Esophagus muscularis mucosa (tissue), 4 donors: ENCODE measurements at regions of chr1 and their contacts with region 1.

Region 1: DNA sequence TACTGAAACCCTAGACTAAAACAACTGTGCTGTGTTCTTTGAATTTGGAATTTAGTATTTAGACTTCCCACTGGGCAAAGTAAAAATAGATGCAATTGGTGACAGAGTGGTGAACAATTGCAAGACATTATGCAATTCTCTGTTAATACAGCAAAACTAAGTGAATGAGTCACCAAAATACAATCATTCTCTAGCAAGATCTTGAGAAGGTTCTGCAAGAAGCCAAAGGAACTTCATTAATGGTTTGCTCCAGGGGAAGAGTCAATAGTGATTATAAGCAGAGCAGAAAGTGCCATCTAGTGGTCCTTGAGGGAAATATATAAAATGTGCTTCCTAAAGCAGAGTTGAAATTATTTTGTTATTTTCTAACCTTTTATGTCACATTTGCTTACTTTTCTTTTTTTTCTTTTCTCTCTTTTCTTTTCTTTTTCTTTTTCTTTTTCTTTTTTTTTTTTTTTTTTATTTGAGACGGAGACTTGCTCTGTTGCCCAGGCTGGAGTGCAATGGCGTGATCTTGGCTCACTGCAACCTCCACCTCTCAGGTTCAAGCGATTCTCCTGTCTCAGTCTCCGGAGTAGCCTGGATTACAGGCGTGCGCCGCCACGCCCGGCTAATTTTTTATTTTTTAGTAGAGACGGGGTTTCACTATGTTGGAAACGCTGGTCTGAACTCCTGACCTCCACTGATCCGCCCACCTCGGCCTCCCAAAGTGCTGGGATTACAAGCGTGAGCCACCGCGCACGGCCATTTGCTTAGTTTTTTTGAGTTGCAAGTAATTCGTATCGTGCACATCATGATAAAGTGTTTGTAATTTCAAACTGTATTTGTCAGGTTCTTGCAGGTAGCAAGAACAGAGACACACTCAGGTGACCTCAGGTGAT is 99.2 kb downstream of the CTH start:
- DNase-seq: no peak
- H3K4me3 ChIP-seq: no peak overlapping the region
- H3K27ac ChIP-seq: no peak overlapping the region
- H3K4me1 ChIP-seq: peaks cover 0 to 8% (median 2%) of the 10 kb centered on the region in 4 donors
- H3K27me3 ChIP-seq: no peaks in the 10 kb centered on the region
- CTCF ChIP-seq: peak; percentile 61 to 67 (median 66)
- EP300 ChIP-seq: no peak
- POLR2A ChIP-seq: no peak

Region 2: GRCh38 chr1:70134148-70134547 is 376.1 kb before region 1 on chr1:
- intact Hi-C with region 1: loop called (anchors 5 kb)
- DNase-seq: no peak
- H3K4me3 ChIP-seq: no peak overlapping the region
- H3K27ac ChIP-seq: no peak overlapping the region
- H3K4me1 ChIP-seq: peaks cover 0 to 11% (median 5%) of the 10 kb centered on the region in 4 donors
- H3K27me3 ChIP-seq: no peaks in the 10 kb centered on the region
- CTCF ChIP-seq: no peak
- EP300 ChIP-seq: no peak
- POLR2A ChIP-seq: no peak

Region 3: GRCh38 chr1:70331962-70332361 is 178.3 kb before region 1 on chr1:
- intact Hi-C with region 1: no loop called
- DNase-seq: no peak
- H3K4me3 ChIP-seq: no peak overlapping the region
- H3K27ac ChIP-seq: no peak overlapping the region
- H3K4me1 ChIP-seq: peaks cover 0 to 8% (median 3%) of the 10 kb centered on the region in 4 donors
- H3K27me3 ChIP-seq: no peaks in the 10 kb centered on the region
- CTCF ChIP-seq: no peak
- EP300 ChIP-seq: no peak
- POLR2A ChIP-seq: no peak

Region 4: DNA sequence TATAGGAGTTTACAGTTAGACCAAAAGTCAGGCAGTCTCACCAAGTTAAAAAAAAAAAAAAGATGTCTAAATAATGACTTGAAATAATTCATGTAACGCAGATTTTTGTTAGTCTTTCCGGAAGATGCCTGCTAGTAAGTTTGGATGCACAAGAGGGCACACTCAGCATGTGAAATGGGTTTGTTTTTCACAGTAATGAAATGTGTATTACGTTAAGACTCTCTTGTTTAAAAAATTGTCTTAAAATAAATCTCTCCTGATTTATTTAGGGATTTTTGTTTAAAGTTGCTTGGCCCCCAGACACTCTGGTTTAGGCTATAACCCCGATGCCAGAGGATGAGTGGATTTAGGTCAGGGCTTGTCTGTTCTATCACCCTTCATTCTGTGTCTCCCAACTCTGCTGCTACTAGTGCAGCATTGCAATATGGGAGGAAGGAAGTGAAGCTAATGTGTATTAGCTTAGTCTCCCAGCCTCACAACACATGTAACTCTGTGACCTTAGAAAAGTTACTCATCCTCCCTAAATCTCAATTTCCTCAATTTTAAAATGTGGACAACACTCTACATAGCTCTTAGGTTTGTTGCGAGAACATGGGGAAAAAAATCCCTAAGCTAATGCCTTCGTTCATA is 73.5 kb before region 1 on chr1:
- intact Hi-C with region 1: loop called (anchors 2 kb)
- DNase-seq: no peak
- H3K4me3 ChIP-seq: no peak overlapping the region
- H3K27ac ChIP-seq: peak overlapping the region in 2 of 4 donors; percentile 13 to 16
- H3K4me1 ChIP-seq: peaks cover 2 to 11% (median 6%) of the 10 kb centered on the region in 4 donors
- H3K27me3 ChIP-seq: no peaks in the 10 kb centered on the region
- CTCF ChIP-seq: peak; percentile 39 to 50 (median 46)
- EP300 ChIP-seq: no peak
- POLR2A ChIP-seq: no peak

Region 5: GRCh38 chr1:70819785-70820184 is 309.5 kb after region 1 on chr1:
- intact Hi-C with region 1: no loop called
- DNase-seq: no peak
- H3K4me3 ChIP-seq: no peak overlapping the region
- H3K27ac ChIP-seq: no peak overlapping the region
- H3K4me1 ChIP-seq: peaks cover 0 to 6% (median 0%) of the 10 kb centered on the region in 4 donors
- H3K27me3 ChIP-seq: no peaks in the 10 kb centered on the region
- CTCF ChIP-seq: no peak
- EP300 ChIP-seq: no peak
- POLR2A ChIP-seq: no peak